Ovary (tissue), 10 donors: ENCODE measurements at regions of chr15 and their contacts with region 1.

Region 1: GRCh38 chr15:44426975-44427755 is at the start of gene CTDSPL2:
- DNase-seq: peak; percentile 98 to 99 (median 98)
- H3K4me3 ChIP-seq: peak within 1 kb of the TSS; percentile 69
- H3K27ac ChIP-seq: peak within 1 kb of the TSS; percentile 73 to 97
- H3K4me1 ChIP-seq: peaks cover 1% of the 10 kb centered on the region
- H3K27me3 ChIP-seq: no peaks in the 10 kb centered on the region
- CTCF ChIP-seq: peak in 1 of 3 donors; percentile 47
- EP300 ChIP-seq: no peak
- POLR2A ChIP-seq: peak; percentile 50
- total RNA-seq, gene CTDSPL2: 44.1 to 54.1 (median 48.1) TPM

Region 2: DNA sequence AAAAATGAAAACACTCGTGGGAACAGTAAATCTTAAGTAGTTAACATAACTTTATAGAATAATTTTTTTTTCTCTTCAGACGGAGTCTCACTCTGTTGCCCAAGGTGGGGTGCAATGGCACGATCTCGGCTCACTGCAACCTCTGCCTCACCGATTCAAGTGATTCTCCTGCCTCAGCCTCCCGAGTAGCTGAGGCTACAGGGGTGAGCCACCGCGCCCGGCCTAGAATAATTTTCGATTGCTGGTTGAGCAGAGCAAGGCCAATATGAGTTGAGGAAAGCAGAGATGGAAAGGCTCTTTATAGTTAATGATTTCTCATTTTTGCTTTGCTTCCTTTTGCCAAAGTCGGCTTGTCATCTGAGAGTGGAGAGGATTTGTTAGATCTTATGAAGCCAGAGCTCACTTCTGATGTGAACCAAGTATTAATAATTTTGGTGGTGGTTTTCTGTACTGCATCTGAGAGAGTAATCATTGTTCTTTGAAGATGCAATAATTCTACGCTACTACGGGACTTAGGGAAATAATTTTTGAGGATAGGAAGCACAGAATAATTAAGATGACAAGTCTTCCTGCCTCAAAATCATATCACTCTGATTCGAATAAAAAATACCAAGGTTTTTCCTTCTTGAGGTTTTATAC is 140.2 kb before region 1 on chr15:
- intact Hi-C with region 1: loop called in 1 of 4 experiments (anchors 5 kb)
- DNase-seq: peak in 3 of 5 donors; percentile 27 to 40 (median 30)
- H3K4me3 ChIP-seq: peak overlapping the region; percentile 94
- H3K27ac ChIP-seq: no peak overlapping the region
- H3K4me1 ChIP-seq: peaks cover 6% of the 10 kb centered on the region
- H3K27me3 ChIP-seq: no peaks in the 10 kb centered on the region
- CTCF ChIP-seq: peak in 2 of 3 donors; percentile 21 to 26
- EP300 ChIP-seq: no peak
- POLR2A ChIP-seq: no peak

Region 3: GRCh38 chr15:44536962-44537734 is 110.0 kb after region 1 on chr15 and contains the start of gene EIF3J:
- intact Hi-C with region 1: loop called in 1 of 4 experiments (anchors 5 kb)
- DNase-seq: peak; percentile 94 to 97 (median 96)
- H3K4me3 ChIP-seq: peak within 1 kb of the TSS; percentile 94
- H3K27ac ChIP-seq: peak within 1 kb of the TSS; percentile 89 to 97
- H3K4me1 ChIP-seq: peaks cover 9% of the 10 kb centered on the region
- H3K27me3 ChIP-seq: no peaks in the 10 kb centered on the region
- CTCF ChIP-seq: peak in 1 of 3 donors; percentile 11
- EP300 ChIP-seq: no peak
- POLR2A ChIP-seq: peak; percentile 28
- total RNA-seq, gene EIF3J: 27.6 to 62.6 (median 49.0) TPM